ENCODE measurements at regions of chr1 and their contacts with region 1.

Region 1: GRCh38 chr1:29896791-29897714 is 660.7 kb downstream of the PTPRU start:
- DNase-seq: no peak

Region 2: DNA sequence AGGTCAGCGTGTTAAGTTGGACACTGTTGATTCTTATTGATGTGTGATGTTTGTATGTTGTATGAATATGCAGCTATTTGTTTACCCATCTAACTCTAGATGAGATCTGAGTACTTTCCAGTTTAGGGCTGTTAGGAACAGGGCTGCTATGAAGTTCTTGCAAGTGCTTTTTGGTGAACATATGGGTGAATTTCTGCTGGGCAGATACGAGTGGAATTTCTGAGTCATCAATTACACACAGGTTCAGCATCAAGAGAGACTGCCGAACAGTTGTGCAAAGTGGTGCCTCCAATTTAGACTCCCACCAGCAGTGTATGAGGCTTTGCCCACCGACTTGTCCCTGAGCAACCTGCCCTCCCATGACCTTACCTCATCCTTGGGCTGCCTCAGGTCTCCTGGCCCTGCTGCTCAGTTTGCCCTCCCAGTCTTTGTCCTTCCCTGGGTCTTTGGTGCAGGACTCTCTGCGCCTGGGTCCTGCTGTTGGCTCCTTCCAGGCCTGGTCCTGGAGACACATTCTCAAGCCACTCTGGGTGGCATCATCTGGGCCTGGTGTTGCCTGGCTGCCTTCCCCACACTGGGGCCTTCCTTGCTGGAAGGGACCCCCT is 317.1 kb before region 1 on chr1:
- intact Hi-C with region 1: no loop called
- DNase-seq: no peak

Region 3: DNA sequence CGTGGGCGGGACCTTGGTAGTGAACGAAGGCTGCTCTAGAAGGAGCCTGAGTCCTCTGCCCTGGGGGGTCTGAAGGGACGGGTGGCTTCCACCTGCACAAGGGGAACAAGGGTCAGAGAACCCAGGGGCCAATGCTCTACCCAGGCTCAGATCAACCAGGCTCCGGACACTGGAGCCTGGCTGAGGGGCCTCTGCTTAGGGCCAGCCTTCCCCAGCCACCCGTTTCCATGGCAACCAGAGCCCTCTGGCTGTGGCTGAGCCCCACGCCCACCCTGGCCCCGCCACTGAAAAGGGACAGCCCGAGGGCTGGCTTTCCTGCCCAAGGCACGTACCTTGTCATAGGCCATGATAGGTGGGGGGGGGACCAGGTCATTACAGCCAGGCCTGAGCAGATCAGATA is 63.8 kb after region 1 on chr1:
- intact Hi-C with region 1: loop called (anchors 5 kb)
- DNase-seq: no peak

Region 4: DNA sequence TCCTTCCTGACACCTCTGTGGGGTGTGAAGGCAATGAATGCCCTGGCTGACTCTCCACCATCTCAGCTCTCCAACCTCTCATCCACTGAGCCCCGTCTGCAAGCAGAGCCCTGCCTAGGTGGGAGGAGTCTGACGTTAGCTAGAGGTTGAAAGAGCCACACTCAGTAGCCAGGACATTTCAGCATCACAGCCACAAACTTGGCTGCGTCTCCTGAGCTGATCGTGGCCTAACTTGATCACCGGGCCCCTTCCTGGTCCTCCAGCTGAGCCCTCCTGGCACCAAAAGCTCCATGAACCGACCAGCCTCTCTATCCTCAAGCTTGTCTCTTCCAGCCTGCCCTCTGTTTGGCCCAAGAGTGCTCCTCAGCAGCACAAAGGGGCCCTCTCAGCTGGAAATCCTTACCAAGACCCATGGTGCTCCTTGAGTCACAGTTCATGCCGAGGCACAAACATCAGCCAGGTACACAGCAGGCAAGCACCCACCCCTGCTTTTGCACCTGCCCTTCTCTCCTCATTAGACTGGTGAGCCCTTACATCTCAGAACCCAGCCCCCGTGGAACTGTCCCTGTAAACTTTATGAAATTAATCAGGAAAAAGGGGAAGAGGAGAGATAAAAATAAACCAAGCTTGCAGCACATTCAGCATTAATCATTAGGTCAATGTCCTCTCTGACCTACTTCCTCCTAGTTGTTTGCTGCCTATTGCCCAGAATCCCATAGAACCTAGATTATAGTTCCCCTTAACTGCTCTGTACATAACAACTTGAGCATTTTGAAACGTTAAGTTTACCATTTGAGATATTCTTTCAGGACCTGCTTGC is 87.7 kb after region 1 on chr1:
- intact Hi-C with region 1: no loop called
- DNase-seq: no peak

Measured in cardiac septum (tissue), 1 donor.